Prostate gland (tissue), 2 donors: ENCODE measurements at regions of chr10 and their contacts with region 1.

Region 1: GRCh38 chr10:132142411-132143161 is 44.2 kb upstream of the DPYSL4 start:
- DNase-seq: no peak
- H3K4me3 ChIP-seq: no peak overlapping the region
- H3K27ac ChIP-seq: no peak overlapping the region
- H3K4me1 ChIP-seq: no peaks in the 10 kb centered on the region
- H3K27me3 ChIP-seq: no peaks in the 10 kb centered on the region
- CTCF ChIP-seq: peak; percentile 65 to 86 (median 77)
- POLR2A ChIP-seq: no peak

Region 2: GRCh38 chr10:131885391-131886161 is 257.0 kb before region 1 on chr10:
- intact Hi-C with region 1: loop called (anchors 5 kb)
- DNase-seq: peak; percentile 72
- H3K4me3 ChIP-seq: no peak overlapping the region
- H3K27ac ChIP-seq: peak overlapping the region in 1 of 2 donors; percentile 24
- H3K4me1 ChIP-seq: peaks cover 8% of the 10 kb centered on the region
- H3K27me3 ChIP-seq: no peaks in the 10 kb centered on the region
- CTCF ChIP-seq: peak; percentile 93 to 98 (median 98)
- POLR2A ChIP-seq: no peak

Region 3: DNA sequence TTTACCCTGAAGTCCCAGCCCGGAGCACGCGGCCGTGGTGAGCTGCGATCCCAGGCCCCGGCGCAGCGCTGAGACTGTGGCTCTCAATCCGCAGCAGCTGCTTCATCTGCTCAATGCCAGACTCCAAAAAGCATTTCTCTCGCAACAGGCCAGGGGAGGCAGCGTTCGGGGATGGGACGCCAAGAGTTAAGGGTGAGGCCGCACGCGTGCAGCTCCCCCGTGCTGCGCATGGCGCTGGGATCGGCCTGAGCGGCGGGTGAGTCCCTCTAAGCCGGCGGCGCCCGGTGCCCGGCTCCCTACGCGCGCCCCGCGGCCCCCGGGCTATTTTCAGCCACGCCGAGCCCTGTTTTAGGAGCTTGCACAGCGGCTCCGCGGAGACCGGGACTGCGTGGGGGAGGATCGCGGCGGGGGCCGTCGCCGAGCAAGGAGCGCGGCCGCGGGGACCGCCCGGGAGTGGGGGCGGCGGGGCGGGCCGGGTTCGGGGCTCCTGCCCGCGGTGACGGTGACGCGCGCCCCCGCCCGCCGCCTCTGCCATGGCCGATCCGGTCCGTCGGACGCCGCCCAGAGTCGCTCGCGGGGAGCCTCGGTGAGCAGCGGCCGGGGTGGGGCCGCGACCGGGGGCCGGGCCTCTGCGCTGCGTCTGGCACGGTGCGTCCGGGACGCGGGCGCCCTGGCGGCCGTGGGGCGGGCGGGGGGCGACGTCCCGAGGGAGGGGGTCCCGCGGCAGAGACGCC is 106.3 kb before region 1 on chr10:
- intact Hi-C with region 1: loop called (anchors 10 kb)
- DNase-seq: peak; percentile 40
- H3K4me3 ChIP-seq: peak overlapping the region; percentile 41 to 68
- H3K27ac ChIP-seq: peak overlapping the region; percentile 64 to 77
- H3K4me1 ChIP-seq: no peaks in the 10 kb centered on the region
- H3K27me3 ChIP-seq: no peaks in the 10 kb centered on the region
- CTCF ChIP-seq: no peak
- POLR2A ChIP-seq: no peak